ENCODE measurements at regions of chr11 and their contacts with region 1.

Region 1: GRCh38 chr11:5369793-5370192 is 13.8 kb upstream of the OR51M1 start:
- DNase-seq: peak in 1 of 10 donors; percentile 46

Region 2: GRCh38 chr11:4991060-4991459 is 378.7 kb before region 1 on chr11:
- intact Hi-C with region 1: no loop called
- DNase-seq: no peak

Region 3: GRCh38 chr11:5204787-5205186 is 165.0 kb before region 1 on chr11:
- intact Hi-C with region 1: loop called (anchors 10 kb)
- DNase-seq: no peak

Region 4: DNA sequence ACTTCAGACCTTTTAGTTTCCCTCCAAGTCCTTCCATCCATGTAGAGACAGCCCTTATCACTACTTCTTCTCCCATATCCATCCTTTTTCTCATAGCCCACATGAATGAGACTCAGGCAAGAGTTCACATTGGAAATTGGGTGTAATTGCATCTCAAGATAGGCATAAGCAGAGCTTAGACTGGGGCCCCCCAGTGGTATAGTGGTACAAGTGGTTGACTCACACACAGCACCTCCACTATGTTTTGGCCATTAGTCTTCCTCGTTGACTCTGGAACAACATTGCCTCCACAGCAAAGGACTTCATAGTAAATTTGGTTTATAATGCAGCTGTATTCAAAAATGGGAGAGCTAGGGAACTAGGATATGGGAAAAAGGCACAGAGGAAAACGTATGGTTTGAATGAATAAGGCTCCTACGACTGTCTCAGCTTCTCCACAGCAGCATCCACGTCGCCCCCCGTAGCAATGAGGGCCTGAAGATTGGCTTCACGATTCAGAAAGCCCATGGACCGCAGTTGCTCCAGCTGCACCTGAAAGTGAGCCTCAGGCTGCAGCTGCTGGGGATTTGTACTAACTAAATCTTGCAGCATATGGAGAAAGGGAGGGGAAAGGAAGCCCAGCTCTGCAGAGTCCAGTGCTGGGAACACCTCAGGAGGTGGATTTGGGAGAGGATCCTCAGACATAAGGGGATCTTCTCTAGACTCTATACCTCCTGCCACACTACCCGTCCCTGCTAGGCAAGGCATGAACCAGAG is 137.6 kb after region 1 on chr11:
- intact Hi-C with region 1: no loop called
- DNase-seq: no peak